PC-3 (cell line): ENCODE measurements at regions of chr13 and their contacts with region 1.

Region 1: GRCh38 chr13:40644838-40645604 is 21.4 kb downstream of the FOXO1 start:
- DNase-seq: no peak
- ATAC-seq: no peak
- H3K4me3 ChIP-seq: no peak overlapping the region
- H3K27ac ChIP-seq: no peak overlapping the region
- H3K4me1 ChIP-seq: 0 out of 2 replicates have a peak, but pooled peaks cover 6% of the 10 kb centered on the region
- H3K27me3 ChIP-seq: no peaks in the 10 kb centered on the region
- CTCF ChIP-seq: no peak

Region 2: GRCh38 chr13:40477623-40478608 is 167.1 kb before region 1 on chr13:
- CTCF ChIA-PET with region 1: no interaction called
- POLR2A ChIA-PET with region 1: no interaction called
- intact Hi-C with region 1: no loop called
- DNase-seq: no peak
- ATAC-seq: no peak
- H3K4me3 ChIP-seq: no peak overlapping the region
- H3K27ac ChIP-seq: no peak overlapping the region
- H3K4me1 ChIP-seq: 0 out of 2 replicates have a peak, but pooled peaks cover 4% of the 10 kb centered on the region
- H3K27me3 ChIP-seq: no peaks in the 10 kb centered on the region
- CTCF ChIP-seq: no peak

Region 3: GRCh38 chr13:40622761-40623160 is 22.3 kb before region 1 on chr13:
- CTCF ChIA-PET with region 1: no interaction called
- POLR2A ChIA-PET with region 1: no interaction called
- intact Hi-C with region 1: loop called (anchors 2 kb)
- DNase-seq: no peak
- ATAC-seq: no peak
- H3K4me3 ChIP-seq: no peak overlapping the region
- H3K27ac ChIP-seq: no peak overlapping the region
- H3K4me1 ChIP-seq: peaks cover 20% of the 10 kb centered on the region
- H3K27me3 ChIP-seq: no peaks in the 10 kb centered on the region
- CTCF ChIP-seq: no peak

Region 4: GRCh38 chr13:40789275-40790133 is 144.5 kb after region 1 on chr13 and contains the start of gene SLC25A15:
- CTCF ChIA-PET with region 1: no interaction called
- POLR2A ChIA-PET with region 1: no interaction called
- intact Hi-C with region 1: no loop called
- DNase-seq: peak; percentile 81
- ATAC-seq: peak; percentile 95
- H3K4me3 ChIP-seq: peak within 1 kb of the TSS; percentile 80
- H3K27ac ChIP-seq: peak within 1 kb of the TSS; percentile 46
- H3K4me1 ChIP-seq: no peaks in the 10 kb centered on the region
- H3K27me3 ChIP-seq: no peaks in the 10 kb centered on the region
- CTCF ChIP-seq: no peak
- total RNA-seq, gene SLC25A15: 20.6 and 22.0 TPM in 2 replicates

Region 5: GRCh38 chr13:40895227-40896184 is 250.5 kb after region 1 on chr13:
- CTCF ChIA-PET with region 1: no interaction called
- POLR2A ChIA-PET with region 1: no interaction called
- intact Hi-C with region 1: no loop called
- DNase-seq: peak; percentile 1
- ATAC-seq: peak; percentile 37
- H3K4me3 ChIP-seq: no peak overlapping the region
- H3K27ac ChIP-seq: no peak overlapping the region
- H3K4me1 ChIP-seq: no peaks in the 10 kb centered on the region
- H3K27me3 ChIP-seq: no peaks in the 10 kb centered on the region
- CTCF ChIP-seq: no peak

Region 6: GRCh38 chr13:41386211-41386610 is 741.2 kb after region 1 on chr13:
- CTCF ChIA-PET with region 1: no interaction called
- POLR2A ChIA-PET with region 1: no interaction called
- intact Hi-C with region 1: no loop called
- DNase-seq: no peak
- ATAC-seq: no peak
- H3K4me3 ChIP-seq: no peak overlapping the region
- H3K27ac ChIP-seq: no peak overlapping the region
- H3K4me1 ChIP-seq: no peaks in the 10 kb centered on the region
- H3K27me3 ChIP-seq: no peaks in the 10 kb centered on the region
- CTCF ChIP-seq: no peak